ENCODE measurements at regions of chr3 and their contacts with region 1.

Region 1: DNA sequence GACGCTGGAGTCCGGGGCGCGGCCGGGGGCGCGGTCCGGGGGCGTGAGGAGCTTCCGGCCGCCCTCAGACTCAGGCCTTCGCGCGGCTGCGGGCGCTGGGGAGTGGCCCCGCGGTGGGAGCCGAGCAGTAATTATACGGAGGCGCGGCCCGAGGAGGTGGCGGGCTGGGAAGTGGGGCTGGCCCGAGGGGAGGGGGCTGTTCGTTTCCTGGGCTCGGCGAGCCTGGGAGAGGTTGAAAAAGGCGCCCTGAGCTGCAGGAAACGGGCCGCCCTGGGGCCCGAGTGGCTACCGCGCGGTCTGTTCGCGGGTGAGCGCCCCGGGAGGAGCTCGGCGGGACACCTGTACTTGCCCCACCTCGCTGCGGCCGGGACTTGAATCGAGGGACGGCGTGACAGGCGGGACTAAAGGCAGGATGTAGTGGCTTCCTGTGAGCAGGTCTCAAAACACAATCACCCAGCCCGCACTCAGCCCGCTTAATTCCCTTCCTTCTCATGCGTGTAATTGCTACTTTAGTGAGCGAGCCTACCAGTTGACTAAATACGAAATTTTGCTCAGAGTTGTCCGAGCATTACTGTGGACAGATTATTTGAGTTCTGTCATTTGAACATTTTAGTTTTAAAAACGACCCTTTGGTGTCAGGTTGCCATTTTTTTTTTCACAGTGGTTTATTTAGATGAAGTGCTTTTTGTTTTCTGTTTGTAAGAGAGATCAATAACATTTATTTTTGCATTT is 860 bp downstream of the RASA2 start:
- DNase-seq: peak; percentile 60
- H3K4me3 ChIP-seq: peak overlapping the region; percentile 93 to 98 (median 96)
- H3K27ac ChIP-seq: peak overlapping the region; percentile 74
- H3K4me1 ChIP-seq: peaks cover 59% of the 10 kb centered on the region
- H3K27me3 ChIP-seq: no peaks in the 10 kb centered on the region
- CTCF ChIP-seq: no peak
- POLR2A ChIP-seq: peak; percentile 64

Region 2: DNA sequence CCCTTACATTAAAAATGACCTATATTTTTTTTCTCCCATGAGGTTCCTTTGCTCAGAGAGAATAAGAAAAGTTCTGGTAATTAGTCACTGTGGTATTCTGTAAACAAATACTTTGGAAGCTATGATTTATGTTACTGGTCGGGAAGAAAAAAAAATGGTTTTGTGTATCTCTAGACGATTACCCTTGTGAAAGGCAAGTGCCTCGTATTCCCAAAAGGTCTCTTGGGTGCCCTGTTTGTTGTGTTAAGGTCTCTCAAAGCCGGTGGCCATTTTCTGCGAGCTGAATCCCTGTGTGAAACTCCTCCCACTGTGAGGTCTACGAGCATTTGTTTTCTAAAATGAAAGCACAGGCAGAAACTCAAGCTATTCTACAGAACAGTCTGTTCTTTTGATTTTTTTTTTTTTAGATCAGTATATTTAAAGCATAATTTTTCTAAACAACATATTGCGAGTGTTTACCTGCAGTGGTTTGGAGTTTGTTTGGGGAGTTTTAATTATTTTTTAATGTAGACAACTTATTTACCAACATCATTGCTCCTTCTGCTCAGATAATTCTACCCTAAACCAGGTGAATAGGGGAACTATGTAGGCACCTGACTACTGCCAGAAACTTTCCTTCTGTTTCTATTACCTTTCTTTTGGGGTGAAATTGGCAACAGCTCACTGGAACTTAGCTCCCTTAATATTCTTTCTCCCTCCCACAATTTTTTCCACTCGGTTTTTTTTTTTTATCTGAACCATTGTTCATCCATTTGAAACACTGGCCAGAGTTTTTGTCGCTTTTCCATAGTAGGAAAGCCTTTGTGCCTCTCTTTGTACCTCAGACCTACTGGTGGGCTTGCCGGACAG is 75.4 kb before region 1 on chr3:
- CTCF ChIA-PET with region 1: no interaction called
- POLR2A ChIA-PET with region 1: no interaction called
- dilution Hi-C with region 1: no loop called
- intact Hi-C with region 1: loop called (anchors 2 kb)
- DNase-seq: peak; percentile 88
- H3K4me3 ChIP-seq: peak overlapping the region in 1 of 3 experiments; percentile 27
- H3K27ac ChIP-seq: peak overlapping the region; percentile 90
- H3K4me1 ChIP-seq: peaks cover 68% of the 10 kb centered on the region
- H3K27me3 ChIP-seq: no peaks in the 10 kb centered on the region
- CTCF ChIP-seq: no peak
- POLR2A ChIP-seq: peak; percentile 41

Region 3: DNA sequence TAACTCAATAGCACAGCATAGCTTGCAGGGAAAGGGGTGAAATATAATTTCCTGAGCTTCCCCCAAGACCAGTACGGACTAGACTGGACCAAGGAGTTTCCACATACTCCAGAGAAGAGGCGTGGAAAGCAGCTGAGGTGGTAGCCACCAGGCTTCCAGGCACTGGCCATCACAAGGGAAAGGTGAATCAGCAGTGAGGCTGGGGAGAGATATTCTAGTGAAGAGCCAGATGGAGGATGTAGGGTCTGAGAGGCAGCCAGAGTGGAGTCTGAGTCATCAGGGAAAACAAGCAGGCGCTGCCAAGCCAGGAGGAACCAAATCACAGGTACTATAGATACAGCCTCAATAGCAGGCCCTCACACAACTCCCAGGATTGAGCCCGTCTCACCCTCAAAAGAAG is 10.5 kb before region 1 on chr3:
- CTCF ChIA-PET with region 1: interaction called, 3 read pairs
- POLR2A ChIA-PET with region 1: no interaction called
- dilution Hi-C with region 1: no loop called
- intact Hi-C with region 1: loop called (anchors 1 kb)
- DNase-seq: peak; percentile 82
- H3K4me3 ChIP-seq: no peak overlapping the region
- H3K27ac ChIP-seq: peak overlapping the region; percentile 48
- H3K4me1 ChIP-seq: peaks cover 9% of the 10 kb centered on the region
- H3K27me3 ChIP-seq: no peaks in the 10 kb centered on the region
- CTCF ChIP-seq: no peak
- POLR2A ChIP-seq: no peak

Region 4: DNA sequence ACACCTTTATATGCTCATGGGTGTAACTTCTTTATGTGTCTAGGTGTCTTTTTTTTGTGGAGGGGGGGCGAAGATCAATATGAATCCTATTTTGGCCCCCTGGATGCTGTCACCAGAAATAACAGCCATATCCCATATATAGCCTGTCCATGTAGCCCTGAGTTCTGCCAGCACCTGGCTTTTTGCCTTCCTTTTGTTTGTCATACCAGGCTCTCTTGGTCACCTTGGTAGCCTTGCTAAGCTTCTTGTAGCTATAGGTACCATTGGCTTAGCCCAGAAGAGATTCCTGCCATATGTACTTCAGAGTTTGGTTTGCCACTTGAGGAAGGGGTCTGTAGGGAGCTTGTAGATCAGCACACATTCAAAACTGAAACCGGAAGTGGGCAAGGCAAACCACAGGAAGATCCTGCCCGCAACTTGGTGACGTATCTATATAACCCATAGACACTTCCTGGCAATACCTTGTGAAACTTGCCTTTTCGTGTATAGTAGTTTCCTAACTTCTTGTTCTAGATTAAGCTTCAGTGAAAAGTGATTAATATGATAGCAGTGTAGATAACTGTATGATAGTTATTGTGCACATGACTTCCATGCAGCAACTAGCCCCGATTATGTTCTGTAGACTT is 11.0 kb after region 1 on chr3:
- CTCF ChIA-PET with region 1: interaction called, 3 read pairs
- POLR2A ChIA-PET with region 1: interaction called, 4 read pairs
- dilution Hi-C with region 1: no loop called
- intact Hi-C with region 1: loop called (anchors 1 kb)
- DNase-seq: no peak
- H3K4me3 ChIP-seq: no peak overlapping the region
- H3K27ac ChIP-seq: no peak overlapping the region
- H3K4me1 ChIP-seq: peaks cover 3% of the 10 kb centered on the region
- H3K27me3 ChIP-seq: no peaks in the 10 kb centered on the region
- CTCF ChIP-seq: no peak
- POLR2A ChIP-seq: no peak

Region 5: GRCh38 chr3:142285083-142285517 is 797.4 kb after region 1 on chr3:
- CTCF ChIA-PET with region 1: no interaction called
- POLR2A ChIA-PET with region 1: no interaction called
- dilution Hi-C with region 1: no loop called
- intact Hi-C with region 1: no loop called
- DNase-seq: no peak
- H3K4me3 ChIP-seq: no peak overlapping the region
- H3K27ac ChIP-seq: no peak overlapping the region
- H3K4me1 ChIP-seq: no peaks in the 10 kb centered on the region
- H3K27me3 ChIP-seq: no peaks in the 10 kb centered on the region
- CTCF ChIP-seq: no peak
- POLR2A ChIP-seq: no peak